ENCODE measurements at regions of chr5 and their contacts with region 1.

Region 1: DNA sequence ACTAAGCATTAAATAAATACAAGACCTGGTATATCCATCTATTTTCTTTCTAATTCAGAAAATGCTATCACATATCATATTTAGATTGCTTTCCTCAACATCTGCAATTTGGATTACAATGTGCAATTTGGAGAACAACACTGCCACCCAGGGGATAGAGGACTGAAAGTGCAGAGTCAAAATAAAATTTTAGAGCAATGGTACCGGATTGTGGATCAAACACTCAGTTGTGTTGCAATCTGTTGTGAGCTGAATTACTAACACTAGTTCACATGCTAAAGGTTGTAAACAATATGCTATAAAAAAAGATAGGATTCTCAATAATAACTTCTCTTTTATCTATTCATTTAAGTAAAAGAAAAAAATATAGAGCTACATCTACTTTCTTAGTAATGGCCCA is 11.9 kb upstream of the SRFBP1 start:
- DNase-seq: peak; percentile 82
- H3K4me3 Mint-ChIP-seq: no peak overlapping the region
- H3K27ac Mint-ChIP-seq: no peak overlapping the region
- H3K4me1 Mint-ChIP-seq: no peaks in the 10 kb centered on the region
- H3K27me3 Mint-ChIP-seq: no peaks in the 10 kb centered on the region
- CTCF ChIP-seq: peak; percentile 85

Region 2: DNA sequence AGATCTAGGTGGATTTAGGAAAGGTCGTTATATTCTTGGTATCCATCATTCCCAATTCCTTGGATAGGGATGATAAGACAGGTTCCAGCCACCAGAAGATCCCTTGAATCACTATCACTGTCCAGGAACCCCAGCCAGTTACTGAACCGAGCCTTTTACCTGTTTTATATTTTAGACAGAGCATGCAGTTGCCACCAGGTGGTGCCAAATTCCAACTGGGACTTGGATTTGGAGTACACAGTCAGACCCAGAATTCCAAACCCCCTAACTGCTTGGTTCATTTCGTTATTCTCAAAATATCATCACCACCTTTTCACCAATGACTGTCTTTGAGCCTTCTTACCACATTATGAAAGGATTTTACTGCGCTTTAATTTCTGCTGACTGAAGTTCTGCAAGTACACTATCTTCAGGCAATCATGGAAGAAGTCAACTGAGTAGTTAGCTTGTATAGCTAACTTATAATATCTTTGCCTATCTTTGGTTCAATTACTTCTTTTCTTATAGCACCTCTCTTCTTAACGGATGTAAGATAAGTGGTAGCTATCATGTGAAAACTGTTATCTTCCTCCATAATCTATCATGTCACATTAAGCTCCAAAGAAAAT is 1293.9 kb before region 1 on chr5:
- CTCF ChIA-PET with region 1: interaction called, 19 read pairs
- POLR2A ChIA-PET with region 1: no interaction called
- intact Hi-C with region 1: loop called (anchors 5 kb)
- DNase-seq: peak; percentile 71
- H3K4me3 Mint-ChIP-seq: no peak overlapping the region
- H3K27ac Mint-ChIP-seq: no peak overlapping the region
- H3K4me1 Mint-ChIP-seq: no peaks in the 10 kb centered on the region
- H3K27me3 Mint-ChIP-seq: no peaks in the 10 kb centered on the region
- CTCF ChIP-seq: peak; percentile 66

Region 3: DNA sequence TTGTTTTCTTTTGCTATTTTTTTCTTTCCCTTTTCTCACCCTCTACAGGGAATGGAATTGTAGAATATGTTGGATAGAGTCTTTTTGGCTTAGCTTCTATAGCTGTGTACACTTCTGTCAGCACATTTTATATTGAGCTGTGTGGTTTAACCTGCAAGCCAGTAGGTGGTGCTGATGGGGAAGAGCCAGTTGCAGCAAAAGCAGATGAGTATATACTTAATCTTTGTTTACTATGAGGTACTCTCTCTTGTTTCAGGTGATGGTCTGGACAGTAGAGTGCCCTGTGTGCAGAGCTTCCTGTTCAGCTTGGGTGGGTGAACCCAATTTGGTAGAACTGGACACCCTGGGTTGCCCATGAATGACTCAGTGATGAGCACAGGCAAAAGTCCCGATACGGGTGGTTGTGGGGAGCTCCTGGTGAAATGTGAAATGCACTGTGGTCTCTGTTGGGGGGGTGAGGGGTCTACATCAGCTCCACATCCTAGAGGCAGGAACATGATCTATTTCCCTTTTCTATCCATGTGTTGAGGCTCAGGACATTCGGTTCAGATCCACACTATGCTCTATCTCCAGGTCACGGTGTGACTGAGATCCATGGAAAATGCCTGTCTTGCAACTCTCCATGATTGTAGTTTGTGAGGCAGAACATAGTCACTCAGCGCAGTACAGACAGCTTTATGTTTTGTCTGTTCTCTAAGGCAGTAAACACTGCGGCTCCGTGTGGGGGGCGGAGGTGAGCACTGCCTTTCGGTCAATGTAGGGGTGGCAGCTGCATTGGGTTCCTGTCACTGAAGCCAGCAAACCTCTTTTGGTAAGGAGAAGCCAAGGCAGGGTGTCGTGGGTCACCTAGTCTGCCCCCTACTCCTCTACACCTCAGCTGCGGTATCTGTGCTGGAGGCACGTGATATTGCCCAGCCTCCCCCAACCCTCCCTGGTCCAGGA is 1132.6 kb before region 1 on chr5:
- CTCF ChIA-PET with region 1: interaction called, 83 read pairs
- POLR2A ChIA-PET with region 1: interaction called, 5 read pairs
- intact Hi-C with region 1: loop called (anchors 2 kb)
- DNase-seq: peak; percentile 50
- H3K4me3 Mint-ChIP-seq: no peak overlapping the region
- H3K27ac Mint-ChIP-seq: no peak overlapping the region
- H3K4me1 Mint-ChIP-seq: no peaks in the 10 kb centered on the region
- H3K27me3 Mint-ChIP-seq: no peaks in the 10 kb centered on the region
- CTCF ChIP-seq: peak; percentile 72

Region 4: GRCh38 chr5:121630402-121630801 is 319.5 kb before region 1 on chr5:
- CTCF ChIA-PET with region 1: interaction called, 27 read pairs
- POLR2A ChIA-PET with region 1: no interaction called
- intact Hi-C with region 1: loop called (anchors 2 kb)
- DNase-seq: peak; percentile 51
- H3K4me3 Mint-ChIP-seq: no peak overlapping the region
- H3K27ac Mint-ChIP-seq: no peak overlapping the region
- H3K4me1 Mint-ChIP-seq: peaks cover 16% of the 10 kb centered on the region
- H3K27me3 Mint-ChIP-seq: no peaks in the 10 kb centered on the region
- CTCF ChIP-seq: peak; percentile 36

Region 5: GRCh38 chr5:121885630-121886029 is 64.2 kb before region 1 on chr5:
- CTCF ChIA-PET with region 1: interaction called, 10 read pairs
- POLR2A ChIA-PET with region 1: no interaction called
- intact Hi-C with region 1: no loop called
- DNase-seq: no peak
- H3K4me3 Mint-ChIP-seq: no peak overlapping the region
- H3K27ac Mint-ChIP-seq: no peak overlapping the region
- H3K4me1 Mint-ChIP-seq: no peaks in the 10 kb centered on the region
- H3K27me3 Mint-ChIP-seq: no peaks in the 10 kb centered on the region
- CTCF ChIP-seq: no peak

Region 6: DNA sequence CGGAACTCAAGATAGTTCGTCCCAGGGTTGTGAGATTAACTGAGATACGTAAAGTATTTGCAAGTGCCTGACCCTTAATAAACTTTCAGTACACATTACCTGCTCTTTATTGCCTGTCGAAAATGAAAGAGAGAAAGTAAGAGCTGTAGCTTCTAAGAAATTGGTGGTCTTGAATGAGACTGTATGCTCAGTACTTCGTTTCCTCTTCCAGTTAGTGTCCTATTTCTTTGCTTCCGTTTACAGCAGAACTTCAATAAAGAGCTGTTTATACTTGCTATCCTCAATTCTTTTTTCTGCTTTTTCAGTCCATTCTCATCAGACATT is 12.4 kb after region 1 on chr5:
- CTCF ChIA-PET with region 1: interaction called, 48 read pairs
- POLR2A ChIA-PET with region 1: interaction called, 16 read pairs
- intact Hi-C with region 1: no loop called
- DNase-seq: no peak
- H3K4me3 Mint-ChIP-seq: peak overlapping the region; percentile 78
- H3K27ac Mint-ChIP-seq: peak overlapping the region; percentile 96
- H3K4me1 Mint-ChIP-seq: peaks cover 13% of the 10 kb centered on the region
- H3K27me3 Mint-ChIP-seq: no peaks in the 10 kb centered on the region
- CTCF ChIP-seq: no peak